Activated T-helper 1 cell treated with anti-CD3 and anti-CD28 coated beads, Interleukin-12 subunit alpha, Interleukin-12 subunit beta, Interleukin-2, Interleukin-4 antibody, amounts not matched to agents 30 ng/mL and 10 ng/mL and 1 ng/mL, durations not matched to agents 14 hours and 24 hours and 36 hours (primary cell): ENCODE measurements at regions of chr16 and their contacts with region 1.

Region 1: GRCh38 chr16:53142823-53143568 is 88.2 kb downstream of the CHD9 start:
- DNase-seq: no peak
- H3K4me3 Mint-ChIP-seq: no peak overlapping the region
- H3K27ac Mint-ChIP-seq: no peak overlapping the region
- H3K4me1 Mint-ChIP-seq: no peaks in the 10 kb centered on the region
- H3K27me3 Mint-ChIP-seq: no peaks in the 10 kb centered on the region

Region 2: DNA sequence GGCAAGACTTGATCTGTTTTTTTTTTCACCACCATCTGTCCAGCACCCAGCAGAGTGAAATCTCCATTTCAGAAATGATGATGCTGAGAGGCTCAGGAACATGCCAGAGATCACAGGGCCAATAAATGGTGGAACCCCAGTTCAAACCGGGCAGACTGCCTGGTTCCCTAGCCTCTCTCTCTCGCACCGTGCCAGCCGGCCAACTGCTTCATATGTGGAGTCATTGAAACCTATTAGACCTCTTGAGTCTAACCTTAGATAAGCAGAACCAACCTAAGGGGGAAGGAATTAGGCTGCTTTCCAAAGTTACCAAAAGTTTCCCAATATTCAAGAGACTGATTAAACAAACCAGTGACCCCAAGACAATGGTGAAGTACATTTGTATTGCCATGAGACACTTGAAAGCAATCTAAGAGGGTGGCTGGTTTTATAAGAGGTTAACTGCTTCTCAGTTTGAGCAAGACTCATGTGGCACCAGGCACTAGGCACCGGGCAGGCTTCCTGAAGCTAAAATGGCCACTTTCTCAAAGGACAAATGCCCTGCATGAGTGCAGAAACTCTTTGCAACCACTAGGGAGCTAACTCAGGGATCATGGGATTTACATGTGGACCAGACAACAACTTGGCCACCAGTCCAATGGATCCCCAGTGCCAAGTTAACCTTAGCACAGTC is 614.5 kb before region 1 on chr16:
- intact Hi-C with region 1: loop called (anchors 10 kb)
- DNase-seq: no peak
- H3K4me3 Mint-ChIP-seq: no peak overlapping the region
- H3K27ac Mint-ChIP-seq: no peak overlapping the region
- H3K4me1 Mint-ChIP-seq: no peaks in the 10 kb centered on the region
- H3K27me3 Mint-ChIP-seq: no peaks in the 10 kb centered on the region